A673 (cell line): ENCODE measurements at regions of chr7 and their contacts with region 1.

Region 1: GRCh38 chr7:121366852-121367431 is 29.2 kb downstream of the FAM3C start:
- DNase-seq: peak; percentile 49
- H3K4me3 ChIP-seq: no peak overlapping the region
- H3K27ac ChIP-seq: no peak overlapping the region
- H3K4me1 ChIP-seq: peaks cover 25% of the 10 kb centered on the region
- H3K27me3 ChIP-seq: no peaks in the 10 kb centered on the region
- CTCF ChIP-seq: peak; percentile 83

Region 2: DNA sequence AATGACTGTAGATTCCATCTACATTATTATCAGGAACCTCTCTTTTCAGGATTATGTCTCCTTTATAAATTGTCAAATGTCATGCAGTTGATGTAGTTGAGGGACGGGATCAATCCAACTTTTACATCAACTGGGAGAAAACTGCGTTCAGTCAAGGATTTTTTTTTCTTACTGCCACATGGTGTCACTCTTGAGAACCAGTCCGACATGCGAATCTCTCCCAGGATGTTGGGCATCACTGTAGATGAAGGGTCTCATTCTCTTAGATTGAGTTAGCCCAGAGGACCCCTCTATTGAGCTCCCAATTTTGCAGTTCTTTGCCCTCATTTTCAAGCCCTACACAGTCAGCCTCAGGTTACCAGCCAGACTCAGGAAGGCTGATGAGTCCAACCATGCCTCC is 385.8 kb after region 1 on chr7:
- CTCF ChIA-PET with region 1: no interaction called
- POLR2A ChIA-PET with region 1: no interaction called
- intact Hi-C with region 1: loop called (anchors 5 kb)
- DNase-seq: peak; percentile 22
- H3K4me3 ChIP-seq: no peak overlapping the region
- H3K27ac ChIP-seq: no peak overlapping the region
- H3K4me1 ChIP-seq: no peaks in the 10 kb centered on the region
- H3K27me3 ChIP-seq: no peaks in the 10 kb centered on the region
- CTCF ChIP-seq: peak; percentile 62